Colonic mucosa (tissue), 4 donors: ENCODE measurements at regions of chr15 and their contacts with region 1.

Region 1: GRCh38 chr15:83011271-83012075 is at the start of gene C15orf40:
- DNase-seq: peak; percentile 90
- H3K4me3 ChIP-seq: peak within 1 kb of the TSS; percentile 87
- H3K27ac ChIP-seq: peak within 1 kb of the TSS; percentile 71
- H3K4me1 ChIP-seq: peaks cover 5% of the 10 kb centered on the region
- H3K27me3 ChIP-seq: no peaks in the 10 kb centered on the region
- CTCF ChIP-seq: no peak
- total RNA-seq, gene C15orf40: 19.0 to 22.7 TPM

Region 2: GRCh38 chr15:82530606-82531379 is 480.7 kb before region 1 on chr15:
- intact Hi-C with region 1: loop called (anchors 10 kb)
- DNase-seq: peak; percentile 80
- H3K4me3 ChIP-seq: peak overlapping the region; percentile 31
- H3K27ac ChIP-seq: no peak overlapping the region
- H3K4me1 ChIP-seq: no peaks in the 10 kb centered on the region
- H3K27me3 ChIP-seq: no peaks in the 10 kb centered on the region
- CTCF ChIP-seq: peak; percentile 80

Region 3: GRCh38 chr15:83066734-83067637 is 55.5 kb after region 1 on chr15 and contains the start of gene BTBD1:
- intact Hi-C with region 1: loop called (anchors 5 kb)
- DNase-seq: peak; percentile 95
- H3K4me3 ChIP-seq: peak within 1 kb of the TSS; percentile 99
- H3K27ac ChIP-seq: peak within 1 kb of the TSS; percentile 97
- H3K4me1 ChIP-seq: peaks cover 18% of the 10 kb centered on the region
- H3K27me3 ChIP-seq: no peaks in the 10 kb centered on the region
- CTCF ChIP-seq: no peak
- total RNA-seq, gene BTBD1: 56.7 to 63.6 TPM

Region 4: GRCh38 chr15:83207622-83208411 is 196.3 kb after region 1 on chr15 and contains the start of gene HDGFL3:
- intact Hi-C with region 1: loop called (anchors 5 kb)
- DNase-seq: peak; percentile 37
- H3K4me3 ChIP-seq: peak within 1 kb of the TSS; percentile 76
- H3K27ac ChIP-seq: peak within 1 kb of the TSS; percentile 60
- H3K4me1 ChIP-seq: no peaks in the 10 kb centered on the region
- H3K27me3 ChIP-seq: no peaks in the 10 kb centered on the region
- CTCF ChIP-seq: no peak
- total RNA-seq, gene HDGFL3: 16.2 to 16.7 TPM